Adrenal gland (tissue), 19 donors: ENCODE measurements at regions of chr1 and their contacts with region 1.

Region 1: GRCh38 chr1:156226116-156226538 is 13.3 kb downstream of the PMF1 start:
- DNase-seq: no peak
- H3K4me3 ChIP-seq: no peak overlapping the region
- H3K27ac ChIP-seq: no peak overlapping the region
- H3K4me1 ChIP-seq: no peaks in the 10 kb centered on the region
- H3K27me3 ChIP-seq: no peaks in the 10 kb centered on the region
- CTCF ChIP-seq: no peak
- POLR2A ChIP-seq: no peak

Region 2: DNA sequence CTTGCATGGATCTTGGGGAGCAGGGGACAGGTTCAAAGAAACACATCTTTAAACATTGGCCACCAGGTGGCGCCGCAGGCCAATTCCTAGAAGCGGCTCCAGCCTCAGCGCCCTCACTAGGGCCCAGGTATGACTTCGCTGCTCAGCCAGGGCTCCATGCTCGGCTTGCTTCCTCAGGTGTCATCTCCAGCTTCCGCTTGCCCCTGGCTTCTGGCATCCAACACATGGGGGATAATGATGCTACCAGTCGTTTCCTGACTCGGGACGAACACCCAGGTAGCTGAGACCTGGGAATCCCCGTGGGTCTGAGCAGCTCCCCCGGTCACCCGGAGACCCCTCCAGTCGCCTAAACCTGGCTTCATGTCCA is 135.3 kb before region 1 on chr1:
- intact Hi-C with region 1: loop called (anchors 5 kb)
- DNase-seq: peak; percentile 77 to 95 (median 88)
- H3K4me3 ChIP-seq: no peak overlapping the region
- H3K27ac ChIP-seq: peak overlapping the region in 1 of 5 donors; percentile 21
- H3K4me1 ChIP-seq: peaks cover 0 to 16% of the 10 kb centered on the region in 2 donors
- H3K27me3 ChIP-seq: no peaks in the 10 kb centered on the region
- CTCF ChIP-seq: peak; percentile 78 to 88 (median 84)
- POLR2A ChIP-seq: no peak

Region 3: DNA sequence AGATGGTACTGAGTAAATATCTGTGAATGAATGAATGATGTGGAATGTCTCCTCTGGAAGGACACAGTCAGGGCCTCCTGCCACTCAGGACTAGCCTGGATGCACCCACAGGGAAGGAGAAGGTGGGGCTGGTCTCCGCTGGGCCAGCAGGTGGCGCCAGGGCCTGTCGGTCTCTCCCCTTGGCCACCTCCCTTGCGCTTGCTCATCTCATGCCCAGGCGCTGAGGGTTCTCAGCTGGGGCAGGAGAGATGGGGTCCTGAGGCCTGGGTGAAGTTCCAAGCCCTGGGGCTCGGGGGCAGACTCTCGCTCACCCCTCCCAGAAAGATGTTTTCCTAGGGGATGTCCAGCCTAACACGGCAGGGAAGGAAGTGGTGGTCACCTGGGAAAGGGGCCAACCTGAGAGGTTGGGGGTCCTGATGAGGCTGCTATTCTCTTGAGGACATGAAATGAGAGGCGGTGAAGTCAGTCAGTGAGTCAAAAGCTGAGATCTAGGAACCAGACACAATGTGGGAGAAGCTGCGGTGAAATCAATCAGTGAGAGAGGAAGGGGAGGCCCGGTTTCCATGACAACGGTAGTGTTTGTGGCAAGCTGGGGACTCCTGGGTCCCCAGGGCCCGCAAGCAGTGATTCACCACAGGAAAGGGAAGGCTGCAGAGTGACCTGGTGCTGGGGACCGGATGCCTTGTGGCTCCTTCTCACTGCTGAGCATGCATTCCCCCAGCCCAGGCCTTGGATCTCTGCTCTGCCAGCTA is 129.3 kb before region 1 on chr1:
- intact Hi-C with region 1: loop called (anchors 5 kb)
- DNase-seq: peak; percentile 89 to 98 (median 93)
- H3K4me3 ChIP-seq: no peak overlapping the region
- H3K27ac ChIP-seq: peak overlapping the region in 3 of 5 donors; percentile 32 to 71 (median 52)
- H3K4me1 ChIP-seq: peaks cover 16 to 29% of the 10 kb centered on the region in 2 donors
- H3K27me3 ChIP-seq: no peaks in the 10 kb centered on the region
- CTCF ChIP-seq: peak; percentile 78 to 99 (median 96)
- POLR2A ChIP-seq: no peak

Region 4: DNA sequence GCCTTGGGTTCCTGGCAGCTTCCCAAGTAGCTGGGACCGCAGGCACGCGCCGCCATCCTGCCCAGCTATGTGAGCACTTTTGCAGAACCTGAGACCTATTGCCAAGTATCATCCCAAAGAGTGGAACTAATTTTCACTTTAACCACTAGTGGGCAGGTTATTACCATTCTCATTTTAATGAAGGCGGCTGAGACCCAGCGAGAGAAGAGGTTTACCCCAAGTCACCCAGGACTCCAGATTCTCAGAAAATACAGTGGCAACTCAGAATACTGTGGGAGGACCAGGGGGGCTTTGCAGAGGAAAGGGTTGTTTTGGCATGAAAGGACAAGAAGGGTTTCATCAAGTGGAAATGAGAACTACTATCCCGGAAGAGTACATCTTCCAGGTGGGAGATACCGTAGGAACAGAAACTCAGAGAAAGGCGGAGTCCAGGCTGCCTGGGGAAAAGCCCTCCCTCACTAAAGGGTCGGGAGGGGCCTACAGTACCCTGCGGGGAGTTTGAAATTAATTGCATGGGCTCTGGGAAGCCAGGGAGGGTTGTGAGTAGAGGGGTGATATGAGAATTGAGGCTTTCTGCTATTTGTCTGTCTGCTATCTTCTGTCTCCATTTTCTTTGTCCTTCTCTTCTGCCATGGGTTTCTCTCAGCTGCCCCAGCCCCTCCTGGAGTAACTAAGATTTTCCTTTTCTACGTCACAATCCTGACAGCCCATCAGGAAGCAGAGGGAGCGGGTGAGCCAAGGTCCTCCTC is 79.9 kb before region 1 on chr1:
- intact Hi-C with region 1: loop called (anchors 5 kb)
- DNase-seq: peak; percentile 86 to 95 (median 94)
- H3K4me3 ChIP-seq: no peak overlapping the region
- H3K27ac ChIP-seq: no peak overlapping the region
- H3K4me1 ChIP-seq: peaks cover 0 to 14% of the 10 kb centered on the region in 2 donors
- H3K27me3 ChIP-seq: no peaks in the 10 kb centered on the region
- CTCF ChIP-seq: peak; percentile 60 to 90 (median 80)
- POLR2A ChIP-seq: no peak